ENCODE measurements at regions of chr9 and their contacts with region 1.

Region 1: GRCh38 chr9:38047301-38048251 is 21.5 kb downstream of the SHB start:
- DNase-seq: peak; percentile 90
- H3K4me3 ChIP-seq: peak overlapping the region in 1 of 3 experiments; percentile 38
- H3K27ac ChIP-seq: peak overlapping the region; percentile 96
- H3K4me1 ChIP-seq: peaks cover 30% of the 10 kb centered on the region
- H3K27me3 ChIP-seq: no peaks in the 10 kb centered on the region
- CTCF ChIP-seq: no peak
- POLR2A ChIP-seq: peak; percentile 34

Region 2: DNA sequence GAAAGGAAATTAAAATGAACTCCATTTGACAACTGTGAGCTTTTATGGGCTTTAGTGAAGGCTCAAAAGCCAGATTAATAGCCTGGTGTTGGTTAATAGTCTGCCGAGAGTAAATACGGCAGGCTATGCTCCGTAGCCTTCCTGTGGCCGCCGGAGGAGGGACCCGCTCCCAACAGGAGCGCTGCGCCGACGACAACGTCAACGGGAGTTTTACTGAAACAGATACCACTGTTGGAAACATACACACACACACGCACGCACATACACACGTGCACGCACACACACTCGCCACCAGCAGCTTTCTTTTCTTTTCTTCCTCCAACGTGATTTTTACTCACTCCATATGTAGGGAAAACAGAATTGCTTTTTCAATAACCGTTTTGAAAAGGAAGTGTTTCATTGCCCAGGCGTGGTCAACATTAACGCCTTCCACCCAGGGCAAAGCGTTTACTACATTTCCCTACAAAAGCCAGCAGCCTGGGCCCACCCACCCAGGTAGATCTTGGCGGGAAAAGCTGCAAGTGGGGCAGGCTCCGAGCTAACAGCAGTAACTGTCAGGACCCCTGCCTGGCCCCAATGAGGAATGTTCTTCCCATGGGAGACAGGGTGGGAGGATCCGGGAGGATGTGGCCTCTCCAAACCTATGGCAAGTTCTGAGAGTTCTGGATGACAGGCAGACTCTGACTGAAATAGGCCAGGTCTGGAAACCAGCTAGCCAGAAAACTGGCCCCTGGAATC is 1085.8 kb before region 1 on chr9:
- CTCF ChIA-PET with region 1: no interaction called
- POLR2A ChIA-PET with region 1: no interaction called
- dilution Hi-C with region 1: no loop called
- intact Hi-C with region 1: no loop called
- DNase-seq: no peak
- H3K4me3 ChIP-seq: peak overlapping the region in 1 of 3 experiments; percentile 7
- H3K27ac ChIP-seq: no peak overlapping the region
- H3K4me1 ChIP-seq: no peaks in the 10 kb centered on the region
- H3K27me3 ChIP-seq: peaks cover 5 to 12% of the 10 kb centered on the region in 2 experiments
- CTCF ChIP-seq: no peak
- POLR2A ChIP-seq: no peak

Region 3: DNA sequence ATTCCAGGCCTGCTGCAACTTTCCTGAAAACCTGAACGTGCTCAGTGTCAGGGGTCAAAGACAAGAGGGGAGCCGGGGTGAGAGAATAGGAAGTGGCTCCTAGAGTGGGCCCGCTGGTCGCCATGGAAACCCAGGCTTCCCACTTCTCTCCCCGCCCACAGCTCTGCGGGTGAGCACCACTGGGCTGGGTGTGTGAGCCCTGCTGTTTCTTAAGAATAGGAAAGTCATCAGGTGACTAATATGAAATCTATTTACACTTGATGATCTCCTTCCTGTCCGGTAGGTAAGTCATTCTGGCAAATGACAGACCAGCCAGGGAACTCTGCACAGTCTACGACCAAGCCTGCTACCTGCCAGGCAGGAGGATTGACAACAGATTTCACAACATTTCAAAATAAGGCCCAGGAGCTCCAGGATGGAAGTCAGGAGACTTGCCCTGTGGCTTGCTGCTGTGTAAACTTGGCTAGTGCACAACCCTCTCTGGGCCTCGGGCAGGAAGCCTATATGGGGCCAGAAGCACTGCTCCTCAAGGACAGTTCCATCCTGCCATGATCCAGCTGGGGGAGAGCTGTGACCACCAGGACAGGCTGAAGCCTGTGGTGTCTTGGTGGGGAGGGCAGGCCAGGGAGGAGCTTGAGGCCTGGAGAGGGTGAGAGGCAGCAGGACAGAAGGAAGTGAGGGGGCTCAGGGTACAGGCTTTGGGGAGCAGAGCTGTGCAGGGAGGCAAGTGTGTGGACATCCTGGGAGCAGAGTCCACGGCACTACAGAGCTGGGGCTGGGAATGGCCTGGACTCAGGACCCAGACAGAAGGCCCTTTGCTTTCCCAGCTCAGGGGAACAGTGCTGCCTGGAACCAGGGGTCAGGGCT is 39.2 kb before region 1 on chr9:
- CTCF ChIA-PET with region 1: interaction called, 3 read pairs
- POLR2A ChIA-PET with region 1: no interaction called
- dilution Hi-C with region 1: no loop called
- intact Hi-C with region 1: loop called (anchors 1 kb)
- DNase-seq: peak; percentile 80
- H3K4me3 ChIP-seq: no peak overlapping the region
- H3K27ac ChIP-seq: peak overlapping the region; percentile 79
- H3K4me1 ChIP-seq: peaks cover 30% of the 10 kb centered on the region
- H3K27me3 ChIP-seq: no peaks in the 10 kb centered on the region
- CTCF ChIP-seq: no peak
- POLR2A ChIP-seq: no peak

Region 4: DNA sequence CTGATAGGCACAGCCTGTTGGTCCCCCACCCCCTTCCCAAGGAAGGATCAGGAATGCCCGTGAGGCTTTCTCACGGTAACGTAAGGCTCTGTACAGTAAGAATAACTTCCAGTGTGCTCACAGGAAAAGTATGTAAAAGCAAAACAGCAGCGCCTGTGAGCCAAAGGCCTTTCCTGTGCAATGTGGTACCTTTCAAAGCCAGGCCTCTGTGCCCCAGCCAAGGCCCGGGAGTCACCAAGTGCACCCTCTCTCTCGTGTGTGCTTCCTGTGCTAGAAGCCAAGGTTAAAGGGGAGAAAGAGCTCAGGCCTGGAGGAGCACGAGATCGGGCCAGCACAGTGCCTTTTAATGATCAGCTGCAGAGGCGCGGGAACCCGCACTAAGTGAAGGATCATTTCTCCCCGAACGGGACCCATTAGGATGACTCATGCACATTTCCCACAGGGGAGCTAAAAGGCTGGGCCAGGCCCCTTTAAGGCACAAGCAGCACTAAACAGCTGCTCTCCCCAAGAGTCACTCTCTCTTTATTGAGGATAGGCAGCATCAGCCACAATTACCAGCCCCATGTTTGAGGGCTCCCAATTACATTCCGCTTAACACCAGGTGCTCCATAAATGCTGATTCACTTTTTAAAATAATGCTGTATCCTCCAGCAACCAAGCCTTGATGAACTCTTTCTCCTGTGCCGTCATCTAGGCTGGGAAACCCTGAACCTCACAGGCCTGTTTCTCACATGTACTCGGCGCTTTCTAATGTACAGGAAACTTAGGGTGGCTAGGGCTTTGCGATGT is 21.4 kb before region 1 on chr9:
- CTCF ChIA-PET with region 1: interaction called, 7 read pairs
- POLR2A ChIA-PET with region 1: interaction called, 8 read pairs
- dilution Hi-C with region 1: no loop called
- intact Hi-C with region 1: loop called (anchors 1 kb)
- DNase-seq: peak; percentile 98
- H3K4me3 ChIP-seq: no peak overlapping the region
- H3K27ac ChIP-seq: peak overlapping the region; percentile 97
- H3K4me1 ChIP-seq: peaks cover 35% of the 10 kb centered on the region
- H3K27me3 ChIP-seq: no peaks in the 10 kb centered on the region
- CTCF ChIP-seq: no peak
- POLR2A ChIP-seq: no peak

Region 5: GRCh38 chr9:38035873-38036272 is 11.7 kb before region 1 on chr9:
- CTCF ChIA-PET with region 1: interaction called, 6 read pairs
- POLR2A ChIA-PET with region 1: interaction called, 4 read pairs
- dilution Hi-C with region 1: no loop called
- intact Hi-C with region 1: loop called (anchors 1 kb)
- DNase-seq: peak; percentile 56
- H3K4me3 ChIP-seq: no peak overlapping the region
- H3K27ac ChIP-seq: peak overlapping the region; percentile 66
- H3K4me1 ChIP-seq: peaks cover 59% of the 10 kb centered on the region
- H3K27me3 ChIP-seq: no peaks in the 10 kb centered on the region
- CTCF ChIP-seq: no peak
- POLR2A ChIP-seq: no peak

Region 6: DNA sequence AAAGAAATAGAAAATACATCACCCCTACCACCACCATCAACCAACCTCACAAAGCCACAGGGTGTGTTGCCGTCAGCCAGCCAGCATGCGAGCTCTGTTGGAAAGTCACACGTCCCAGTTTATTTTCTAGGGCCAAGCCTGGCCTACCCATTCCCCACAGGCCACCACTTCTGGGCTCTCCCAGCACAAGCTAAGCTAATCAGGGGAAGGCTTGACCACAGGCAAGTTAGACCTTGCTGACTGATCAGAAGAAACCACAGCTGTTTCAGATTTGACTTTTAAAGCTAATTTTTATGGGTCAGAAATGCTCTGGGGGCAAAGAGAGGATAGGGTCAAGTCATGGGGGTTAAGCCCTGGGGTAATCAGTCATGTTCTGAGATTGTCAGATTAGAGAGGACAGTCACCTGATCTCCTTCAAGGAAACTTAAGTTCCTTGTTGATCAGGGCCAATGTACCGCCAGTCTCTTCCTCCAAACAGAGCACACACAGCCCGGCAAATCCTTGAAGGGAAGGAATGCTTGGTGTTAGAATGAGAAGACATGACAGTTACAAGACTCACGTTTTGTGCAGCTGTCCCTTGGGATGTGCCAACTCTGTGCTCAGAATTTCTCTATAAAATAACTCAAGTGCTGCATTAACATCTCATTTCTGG is 13.9 kb after region 1 on chr9:
- CTCF ChIA-PET with region 1: interaction called, 8 read pairs
- POLR2A ChIA-PET with region 1: interaction called, 5 read pairs
- dilution Hi-C with region 1: no loop called
- intact Hi-C with region 1: loop called (anchors 1 kb)
- DNase-seq: no peak
- H3K4me3 ChIP-seq: no peak overlapping the region
- H3K27ac ChIP-seq: no peak overlapping the region
- H3K4me1 ChIP-seq: peaks cover 65% of the 10 kb centered on the region
- H3K27me3 ChIP-seq: no peaks in the 10 kb centered on the region
- CTCF ChIP-seq: no peak
- POLR2A ChIP-seq: no peak

Measured in endothelial cell of umbilical vein (primary cell).